H1 (cell line): ENCODE measurements at regions of chr11 and their contacts with region 1.

Region 1: DNA sequence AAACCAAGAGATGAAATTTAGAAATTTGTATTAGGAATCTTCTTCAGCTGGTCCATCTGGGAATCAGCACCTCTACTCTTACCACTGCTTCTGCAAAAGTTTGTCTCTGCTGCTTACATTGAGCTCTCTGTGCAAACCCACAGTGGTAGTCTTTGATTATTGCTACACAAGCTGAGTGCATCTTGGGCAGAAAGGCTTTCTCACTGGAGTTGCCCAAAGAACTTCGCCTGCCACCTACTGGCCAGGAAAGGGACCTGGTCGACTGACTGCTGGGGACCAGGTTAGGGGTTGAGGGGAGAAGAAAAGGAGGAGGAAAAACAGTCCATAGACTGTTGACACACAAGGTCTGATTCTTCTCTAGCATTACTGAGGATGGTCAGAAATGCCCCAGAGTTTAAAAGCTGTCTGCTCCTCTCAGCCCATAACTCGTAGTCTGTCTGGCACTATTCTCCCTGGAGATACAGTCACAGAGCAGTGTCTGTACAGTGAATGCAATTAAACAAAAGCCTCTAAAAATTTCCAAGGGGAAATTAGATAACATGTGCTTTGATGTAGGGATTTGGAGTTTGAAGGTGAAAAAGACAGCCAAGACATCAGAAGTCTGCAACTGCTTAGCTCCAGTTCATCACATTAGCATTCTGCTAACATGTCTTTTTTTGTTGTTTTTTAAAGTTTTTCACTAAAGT is 215.0 kb upstream of the CTSC start:
- DNase-seq: peak; percentile 21 to 72
- H3K4me3 ChIP-seq: no peak overlapping the region
- H3K27ac ChIP-seq: no peak overlapping the region
- H3K4me1 ChIP-seq: peaks cover 0 to 2% (median 0%) of the 10 kb centered on the region in 4 experiments; a peak in 1 of 7 replicates
- H3K27me3 ChIP-seq: no peaks in the 10 kb centered on the region
- CTCF ChIP-seq: peak; percentile 74 to 93 (median 85)
- EP300 ChIP-seq: no peak
- POLR2A ChIP-seq: no peak
- RAD21 ChIP-seq: peak; percentile 84 to 89

Region 2: GRCh38 chr11:88103337-88104206 is 448.9 kb before region 1 on chr11:
- CTCF ChIA-PET with region 1: interaction called, 20 read pairs
- POLR2A ChIA-PET with region 1: interaction called, 3 read pairs
- DNase-seq: peak; percentile 63 to 65
- H3K4me3 ChIP-seq: no peak overlapping the region
- H3K27ac ChIP-seq: no peak overlapping the region
- H3K4me1 ChIP-seq: peaks cover 0 to 5% (median 0%) of the 10 kb centered on the region in 4 experiments; a peak in 2 of 7 replicates
- H3K27me3 ChIP-seq: no peaks in the 10 kb centered on the region
- CTCF ChIP-seq: peak; percentile 71 to 99 (median 95)
- EP300 ChIP-seq: no peak
- POLR2A ChIP-seq: no peak
- RAD21 ChIP-seq: peak; percentile 82 to 83

Region 3: GRCh38 chr11:88538088-88538487 is 14.4 kb before region 1 on chr11:
- CTCF ChIA-PET with region 1: interaction called, 20 read pairs
- POLR2A ChIA-PET with region 1: no interaction called
- DNase-seq: no peak
- H3K4me3 ChIP-seq: no peak overlapping the region
- H3K27ac ChIP-seq: no peak overlapping the region
- H3K4me1 ChIP-seq: no peaks in the 10 kb centered on the region
- H3K27me3 ChIP-seq: no peaks in the 10 kb centered on the region
- CTCF ChIP-seq: no peak
- EP300 ChIP-seq: no peak
- POLR2A ChIP-seq: no peak
- RAD21 ChIP-seq: no peak

Region 4: DNA sequence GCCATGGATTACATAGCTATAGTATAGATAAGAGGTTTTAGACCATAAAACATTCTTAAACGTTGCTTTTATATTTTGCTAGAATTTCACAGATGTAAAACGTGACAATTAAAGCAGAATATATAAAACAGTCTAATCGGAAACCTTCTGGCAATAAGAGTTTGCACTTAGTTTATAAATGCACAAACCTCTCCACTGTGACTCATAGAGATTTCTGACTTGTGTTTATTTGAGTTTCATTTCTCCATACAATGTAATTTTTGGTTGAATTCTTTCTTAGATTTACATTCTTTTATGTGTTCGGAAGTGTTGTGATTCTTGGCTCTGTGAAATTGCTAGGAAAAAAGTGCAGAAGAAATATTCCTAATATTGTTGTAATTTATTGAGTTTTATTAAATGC is 73.7 kb after region 1 on chr11:
- CTCF ChIA-PET with region 1: no interaction called
- POLR2A ChIA-PET with region 1: no interaction called
- DNase-seq: no peak
- H3K4me3 ChIP-seq: no peak overlapping the region
- H3K27ac ChIP-seq: no peak overlapping the region
- H3K4me1 ChIP-seq: 0 out of 7 replicates have a peak, but pooled peaks cover 0 to 2% (median 0%) of the 10 kb centered on the region in 4 experiments
- H3K27me3 ChIP-seq: no peaks in the 10 kb centered on the region
- CTCF ChIP-seq: no peak
- EP300 ChIP-seq: no peak
- POLR2A ChIP-seq: no peak
- RAD21 ChIP-seq: no peak